ENCODE measurements at regions of chrX and their contacts with region 1.

Region 1: GRCh38 chrX:24767557-24767956 is 73.8 kb downstream of the POLA1 start:
- DNase-seq: no peak
- H3K4me3 Mint-ChIP-seq: no peak overlapping the region
- H3K27ac Mint-ChIP-seq: no peak overlapping the region
- H3K4me1 Mint-ChIP-seq: no peaks in the 10 kb centered on the region
- H3K27me3 Mint-ChIP-seq: peaks cover 64% of the 10 kb centered on the region
- CTCF ChIP-seq: no peak

Region 2: DNA sequence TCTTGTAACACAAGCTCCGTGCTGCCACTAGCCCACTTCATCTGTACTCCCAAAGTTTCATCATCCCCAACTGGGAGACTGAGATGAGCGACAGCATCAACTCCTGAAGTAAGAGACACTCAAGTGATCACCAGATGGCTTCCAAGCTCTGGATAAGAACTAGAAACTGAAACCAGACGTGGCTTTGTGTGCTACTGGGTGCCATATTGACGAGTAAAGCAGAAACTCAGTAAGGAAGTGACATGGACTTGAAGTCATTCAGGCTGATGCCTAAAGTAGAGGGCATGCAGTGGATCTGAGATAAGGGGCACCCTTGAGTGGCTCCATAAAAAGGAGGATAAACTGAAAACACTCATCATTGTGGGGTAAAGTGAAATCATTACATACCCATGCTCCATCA is 192.8 kb before region 1 on chrX:
- CTCF ChIA-PET with region 1: no interaction called
- POLR2A ChIA-PET with region 1: no interaction called
- intact Hi-C with region 1: loop called (anchors 5 kb)
- DNase-seq: no peak
- H3K4me3 Mint-ChIP-seq: no peak overlapping the region
- H3K27ac Mint-ChIP-seq: no peak overlapping the region
- H3K4me1 Mint-ChIP-seq: no peaks in the 10 kb centered on the region
- H3K27me3 Mint-ChIP-seq: peaks cover 41% of the 10 kb centered on the region
- CTCF ChIP-seq: no peak

Region 3: GRCh38 chrX:24732766-24733500 is 34.6 kb before region 1 on chrX:
- CTCF ChIA-PET with region 1: no interaction called
- POLR2A ChIA-PET with region 1: no interaction called
- intact Hi-C with region 1: no loop called
- DNase-seq: no peak
- H3K4me3 Mint-ChIP-seq: no peak overlapping the region
- H3K27ac Mint-ChIP-seq: no peak overlapping the region
- H3K4me1 Mint-ChIP-seq: no peaks in the 10 kb centered on the region
- H3K27me3 Mint-ChIP-seq: peaks cover 44% of the 10 kb centered on the region
- CTCF ChIP-seq: no peak

Region 4: DNA sequence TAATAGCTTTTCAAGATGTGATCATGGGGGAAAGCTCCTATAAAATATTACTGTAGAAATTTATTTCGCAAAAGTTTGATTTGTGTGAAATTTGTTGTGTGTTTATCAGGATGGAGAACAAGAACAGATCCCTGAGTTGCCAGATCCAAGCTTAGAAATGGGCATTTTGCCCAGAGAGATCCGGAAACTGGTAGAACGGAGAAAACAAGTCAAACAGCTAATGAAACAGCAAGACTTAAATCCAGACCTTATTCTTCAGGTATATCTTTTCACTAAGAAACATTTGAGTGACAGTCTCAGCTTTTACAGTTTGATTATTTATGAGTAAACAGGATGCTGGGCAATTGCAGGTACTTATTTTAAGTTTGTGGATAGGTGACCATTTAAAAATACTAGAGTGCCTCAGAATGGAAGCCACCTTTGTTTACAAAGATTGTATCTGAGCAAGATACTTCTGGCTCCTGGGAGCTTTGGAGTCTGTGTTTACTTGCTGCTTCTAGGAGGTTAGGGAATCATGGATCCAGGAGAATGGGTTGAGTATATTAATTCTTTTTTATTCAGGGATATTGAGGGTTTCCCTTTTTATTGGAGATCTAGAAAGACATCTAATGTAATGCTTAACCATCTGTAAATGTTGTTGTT is 19.2 kb before region 1 on chrX:
- CTCF ChIA-PET with region 1: interaction called, 42 read pairs
- POLR2A ChIA-PET with region 1: no interaction called
- intact Hi-C with region 1: no loop called
- DNase-seq: no peak
- H3K4me3 Mint-ChIP-seq: no peak overlapping the region
- H3K27ac Mint-ChIP-seq: no peak overlapping the region
- H3K4me1 Mint-ChIP-seq: no peaks in the 10 kb centered on the region
- H3K27me3 Mint-ChIP-seq: peaks cover 34% of the 10 kb centered on the region
- CTCF ChIP-seq: no peak

Measured in MCF 10A (cell line).